ENCODE measurements at regions of chr20 and their contacts with region 1.

Region 1: GRCh38 chr20:32652739-32653526 is 20.8 kb downstream of the C20orf203 start:
- DNase-seq: peak; percentile 91
- H3K4me3 Mint-ChIP-seq: no peak overlapping the region
- H3K27ac Mint-ChIP-seq: no peak overlapping the region
- H3K4me1 Mint-ChIP-seq: peaks cover 15% of the 10 kb centered on the region
- H3K27me3 Mint-ChIP-seq: peaks cover 26% of the 10 kb centered on the region

Region 2: GRCh38 chr20:32516583-32517517 is 136.1 kb before region 1 on chr20:
- CTCF ChIA-PET with region 1: interaction called, 283 read pairs
- DNase-seq: no peak
- H3K4me3 Mint-ChIP-seq: no peak overlapping the region
- H3K27ac Mint-ChIP-seq: no peak overlapping the region
- H3K4me1 Mint-ChIP-seq: peaks cover 61% of the 10 kb centered on the region
- H3K27me3 Mint-ChIP-seq: no peaks in the 10 kb centered on the region

Region 3: DNA sequence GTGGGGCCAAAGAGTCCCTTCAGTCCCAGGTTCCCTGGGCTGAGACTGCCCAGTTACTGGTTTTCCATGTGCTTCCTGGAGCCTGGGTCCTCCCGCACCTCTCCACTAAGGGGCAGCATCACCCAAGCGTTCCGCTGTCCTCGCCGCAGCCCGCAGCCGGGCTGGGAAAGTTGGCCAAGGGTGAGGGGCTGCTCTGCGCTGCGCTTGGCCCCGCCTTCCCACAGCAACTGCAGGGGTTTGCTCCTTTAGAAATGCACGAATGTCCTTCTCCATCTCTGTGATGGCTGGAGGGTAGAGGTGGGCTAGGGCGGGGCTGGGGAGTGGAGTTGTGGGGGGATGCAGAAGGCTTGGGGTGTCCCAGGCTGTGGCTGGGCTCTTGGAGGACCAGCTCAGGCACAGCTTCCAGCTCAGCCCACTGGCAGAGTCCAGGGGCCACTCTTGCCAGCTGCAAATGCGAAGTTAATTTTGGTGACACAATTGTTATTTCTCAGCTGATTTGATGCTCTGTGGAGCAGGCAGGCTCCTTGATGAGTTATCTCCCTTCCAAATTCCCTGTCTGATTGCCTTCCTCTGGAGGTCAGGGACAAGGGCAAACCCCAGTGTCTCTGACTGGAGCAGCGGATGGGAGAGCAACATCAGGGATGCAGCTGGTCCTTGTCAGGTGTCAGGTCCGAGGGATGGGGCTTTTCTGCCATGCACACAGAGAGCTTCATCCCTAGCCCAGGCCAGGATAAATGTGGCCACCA is 131.0 kb before region 1 on chr20:
- CTCF ChIA-PET with region 1: interaction called, 283 read pairs
- DNase-seq: peak; percentile 78
- H3K4me3 Mint-ChIP-seq: no peak overlapping the region
- H3K27ac Mint-ChIP-seq: peak overlapping the region; percentile 73
- H3K4me1 Mint-ChIP-seq: peaks cover 60% of the 10 kb centered on the region
- H3K27me3 Mint-ChIP-seq: no peaks in the 10 kb centered on the region